MCF 10A (cell line): ENCODE measurements at regions of chr12 and their contacts with region 1.

Region 1: DNA sequence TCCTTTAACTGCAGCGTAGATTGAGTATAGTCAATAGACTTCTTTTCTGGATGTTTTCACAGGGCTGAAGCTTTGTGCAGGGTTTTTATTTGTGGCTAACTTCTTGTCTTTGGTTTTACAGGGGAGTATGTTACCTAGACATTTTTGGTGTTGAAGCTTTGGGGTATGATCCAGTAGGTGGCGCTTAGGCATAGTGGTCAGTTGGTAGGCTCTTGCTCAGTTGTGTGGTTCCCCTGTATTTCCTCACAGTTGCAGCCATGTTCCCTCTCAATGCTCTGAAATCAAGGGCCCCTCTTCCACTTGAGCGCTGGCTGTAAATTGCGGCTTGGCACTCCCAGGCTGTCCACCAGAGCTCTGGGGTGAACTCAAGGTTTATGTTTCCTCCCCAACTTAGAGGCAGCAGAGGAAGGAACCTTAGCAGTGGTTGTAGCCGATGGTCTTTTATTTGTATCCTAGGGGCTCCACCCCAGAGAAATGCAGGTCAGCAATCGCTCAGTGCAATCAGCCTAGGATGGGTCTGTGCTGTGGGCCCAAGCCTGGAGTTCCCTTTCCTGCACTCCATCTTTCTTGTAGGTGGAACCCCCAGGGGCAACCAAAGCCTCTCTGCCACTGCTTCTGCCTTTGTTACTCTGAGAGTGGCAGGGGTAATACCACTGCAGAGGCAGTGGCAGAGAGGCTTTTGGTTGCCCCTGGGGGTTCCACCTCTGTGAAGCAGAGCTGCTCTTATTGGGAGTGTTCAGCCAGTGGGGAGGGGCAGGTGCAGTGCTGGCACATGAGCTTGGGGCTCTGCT is 55.1 kb downstream of the CMAS start:
- DNase-seq: peak; percentile 82
- H3K4me3 Mint-ChIP-seq: no peak overlapping the region
- H3K27ac Mint-ChIP-seq: peak overlapping the region; percentile 81
- H3K4me1 Mint-ChIP-seq: peaks cover 19% of the 10 kb centered on the region
- H3K27me3 Mint-ChIP-seq: no peaks in the 10 kb centered on the region
- CTCF ChIP-seq: peak; percentile 58

Region 2: GRCh38 chr12:21989819-21990412 is 111.2 kb before region 1 on chr12:
- CTCF ChIA-PET with region 1: no interaction called
- POLR2A ChIA-PET with region 1: no interaction called
- intact Hi-C with region 1: no loop called
- DNase-seq: peak; percentile 39
- H3K4me3 Mint-ChIP-seq: no peak overlapping the region
- H3K27ac Mint-ChIP-seq: no peak overlapping the region
- H3K4me1 Mint-ChIP-seq: no peaks in the 10 kb centered on the region
- H3K27me3 Mint-ChIP-seq: peaks cover 25% of the 10 kb centered on the region
- CTCF ChIP-seq: peak; percentile 57

Region 3: DNA sequence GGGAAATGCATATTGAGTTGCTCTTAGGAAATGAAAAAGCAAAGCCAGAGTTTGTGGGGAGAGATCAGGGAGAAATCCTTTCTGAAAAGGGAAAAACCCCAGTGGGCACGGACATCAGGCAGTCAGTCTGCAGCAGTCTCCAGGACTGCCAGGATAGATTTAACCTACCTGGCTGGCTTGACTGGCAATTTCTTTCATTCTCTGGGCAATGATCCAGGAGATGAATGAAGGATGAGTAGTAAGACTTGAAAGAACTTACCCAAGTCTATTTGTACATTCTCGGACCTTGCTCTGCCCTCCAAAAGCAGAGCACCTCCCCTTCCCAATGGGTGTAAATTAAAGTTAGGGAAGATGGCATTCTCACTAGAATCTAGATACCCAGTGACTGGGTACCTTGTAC is 12.3 kb before region 1 on chr12:
- CTCF ChIA-PET with region 1: interaction called, 28 read pairs
- POLR2A ChIA-PET with region 1: interaction called, 3 read pairs
- intact Hi-C with region 1: no loop called
- DNase-seq: peak; percentile 65
- H3K4me3 Mint-ChIP-seq: no peak overlapping the region
- H3K27ac Mint-ChIP-seq: no peak overlapping the region
- H3K4me1 Mint-ChIP-seq: peaks cover 7% of the 10 kb centered on the region
- H3K27me3 Mint-ChIP-seq: no peaks in the 10 kb centered on the region
- CTCF ChIP-seq: no peak

Region 4: DNA sequence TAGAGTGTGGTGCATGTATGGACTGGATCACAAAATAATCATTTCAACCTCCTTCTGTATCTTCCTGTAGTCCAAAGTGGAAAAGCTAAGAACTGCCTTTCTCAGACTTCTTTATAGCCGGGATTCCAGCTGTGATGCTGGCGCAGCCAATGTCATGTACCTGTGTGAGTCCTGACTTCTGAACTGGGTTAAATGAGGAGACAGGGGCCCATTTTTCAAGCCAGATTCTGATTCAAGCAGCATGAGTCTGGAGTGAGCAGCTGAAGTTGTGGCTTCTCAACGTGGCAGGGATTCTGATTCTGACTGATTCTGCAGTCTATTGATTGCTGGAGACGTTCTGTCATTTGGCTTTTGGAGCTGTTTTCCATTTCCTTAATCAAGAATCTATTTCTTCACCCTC is 122.2 kb after region 1 on chr12:
- CTCF ChIA-PET with region 1: no interaction called
- POLR2A ChIA-PET with region 1: no interaction called
- intact Hi-C with region 1: loop called (anchors 5 kb)
- DNase-seq: no peak
- H3K4me3 Mint-ChIP-seq: no peak overlapping the region
- H3K27ac Mint-ChIP-seq: no peak overlapping the region
- H3K4me1 Mint-ChIP-seq: peaks cover 6% of the 10 kb centered on the region
- H3K27me3 Mint-ChIP-seq: peaks cover 12% of the 10 kb centered on the region
- CTCF ChIP-seq: no peak

Region 5: DNA sequence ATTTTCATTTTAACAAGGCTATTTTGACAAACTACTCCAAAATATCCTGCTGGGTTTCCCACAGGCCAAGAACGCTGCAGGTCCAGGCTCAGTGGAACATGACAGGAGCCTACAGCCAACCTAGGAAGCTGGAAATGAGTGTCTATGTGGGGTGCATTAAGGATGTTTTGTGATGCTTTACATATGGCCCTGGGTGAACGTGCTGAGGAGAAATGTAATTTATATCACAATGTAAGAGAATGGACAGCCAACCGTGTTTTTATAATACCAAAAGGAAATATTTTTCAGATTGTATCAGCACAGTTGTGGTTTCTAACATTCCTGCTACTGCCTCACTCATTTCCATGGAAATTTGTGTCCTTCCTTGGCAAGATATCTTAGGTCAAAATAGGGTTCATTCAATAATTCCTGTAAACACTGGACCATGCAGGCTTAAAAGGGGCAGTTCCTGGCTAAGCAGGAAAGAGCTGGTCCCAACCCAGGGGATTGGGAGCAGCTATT is 181.9 kb after region 1 on chr12:
- CTCF ChIA-PET with region 1: interaction called, 16 read pairs
- POLR2A ChIA-PET with region 1: interaction called, 3 read pairs
- intact Hi-C with region 1: no loop called
- DNase-seq: peak; percentile 76
- H3K4me3 Mint-ChIP-seq: no peak overlapping the region
- H3K27ac Mint-ChIP-seq: peak overlapping the region; percentile 88
- H3K4me1 Mint-ChIP-seq: peaks cover 37% of the 10 kb centered on the region
- H3K27me3 Mint-ChIP-seq: no peaks in the 10 kb centered on the region
- CTCF ChIP-seq: no peak

Region 6: GRCh38 chr12:22377731-22378496 is 276.8 kb after region 1 on chr12:
- CTCF ChIA-PET with region 1: no interaction called
- POLR2A ChIA-PET with region 1: no interaction called
- intact Hi-C with region 1: no loop called
- DNase-seq: no peak
- H3K4me3 Mint-ChIP-seq: no peak overlapping the region
- H3K27ac Mint-ChIP-seq: no peak overlapping the region
- H3K4me1 Mint-ChIP-seq: peaks cover 5% of the 10 kb centered on the region
- H3K27me3 Mint-ChIP-seq: no peaks in the 10 kb centered on the region
- CTCF ChIP-seq: no peak

Region 7: GRCh38 chr12:22443379-22444316 is 342.5 kb after region 1 on chr12:
- CTCF ChIA-PET with region 1: interaction called, 18 read pairs
- POLR2A ChIA-PET with region 1: no interaction called
- intact Hi-C with region 1: loop called (anchors 1 kb)
- DNase-seq: peak; percentile 87
- H3K4me3 Mint-ChIP-seq: no peak overlapping the region
- H3K27ac Mint-ChIP-seq: no peak overlapping the region
- H3K4me1 Mint-ChIP-seq: no peaks in the 10 kb centered on the region
- H3K27me3 Mint-ChIP-seq: peaks cover 20% of the 10 kb centered on the region
- CTCF ChIP-seq: peak; percentile 73